ENCODE measurements at regions of chr12 and their contacts with region 1.

Region 1: GRCh38 chr12:70590051-70590450 is 47.2 kb downstream of the PTPRB start:
- DNase-seq: peak; percentile 65 to 76
- H3K4me3 ChIP-seq: no peak overlapping the region
- H3K4me3 Mint-ChIP-seq: no peak overlapping the region
- H3K27ac Mint-ChIP-seq: no peak overlapping the region
- H3K4me1 ChIP-seq: no peaks in the 10 kb centered on the region
- H3K4me1 Mint-ChIP-seq: no peaks in the 10 kb centered on the region
- H3K27me3 ChIP-seq: no peaks in the 10 kb centered on the region
- H3K27me3 Mint-ChIP-seq: peaks cover 3% of the 10 kb centered on the region
- CTCF ChIP-seq: peak; percentile 88 to 93

Region 2: DNA sequence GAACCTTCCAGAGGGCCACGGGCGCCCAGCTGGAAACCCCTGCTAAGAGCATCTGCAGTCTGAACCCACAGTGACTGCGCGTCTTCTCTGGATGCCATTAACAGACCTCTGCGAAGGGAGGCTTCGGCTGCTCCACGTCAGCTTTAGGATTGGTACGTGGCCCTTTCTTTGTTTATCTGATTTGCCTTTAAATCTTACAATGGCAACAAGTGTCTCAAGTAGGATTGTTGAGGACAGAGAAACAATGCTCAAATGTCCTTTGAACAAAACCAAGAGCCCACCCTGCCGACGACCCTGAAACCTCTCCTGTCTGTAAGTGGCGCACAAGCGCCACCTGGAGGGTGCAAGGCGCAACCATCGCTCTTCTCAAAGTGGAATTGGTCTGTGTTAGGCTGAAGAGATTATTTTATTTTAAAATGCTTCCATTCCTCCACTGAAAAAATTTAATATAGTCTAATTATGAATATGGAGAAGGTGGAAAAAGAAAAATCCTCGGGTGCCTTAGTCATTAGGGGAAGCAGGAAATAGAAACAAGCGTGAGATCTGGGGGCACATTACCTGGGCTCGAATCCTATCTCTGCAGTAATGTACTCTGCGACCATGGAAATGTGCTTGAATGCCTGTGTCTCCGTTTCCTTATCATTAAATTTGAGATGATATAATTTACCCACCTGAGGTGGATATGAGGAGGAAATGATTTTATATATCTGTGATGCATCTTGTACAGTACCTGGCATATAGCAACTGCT is 129.8 kb after region 1 on chr12:
- CTCF ChIA-PET with region 1: interaction called, 10 read pairs
- POLR2A ChIA-PET with region 1: no interaction called
- intact Hi-C with region 1: loop called (anchors 1 kb)
- DNase-seq: peak in 1 of 2 experiments; percentile 32
- H3K4me3 ChIP-seq: no peak overlapping the region
- H3K4me3 Mint-ChIP-seq: no peak overlapping the region
- H3K27ac Mint-ChIP-seq: no peak overlapping the region
- H3K4me1 ChIP-seq: no peaks in the 10 kb centered on the region
- H3K4me1 Mint-ChIP-seq: no peaks in the 10 kb centered on the region
- H3K27me3 ChIP-seq: no peaks in the 10 kb centered on the region
- H3K27me3 Mint-ChIP-seq: no peaks in the 10 kb centered on the region
- CTCF ChIP-seq: peak; percentile 87

Region 3: GRCh38 chr12:71014180-71014785 is 424.2 kb after region 1 on chr12:
- CTCF ChIA-PET with region 1: interaction called, 5 read pairs
- POLR2A ChIA-PET with region 1: no interaction called
- intact Hi-C with region 1: loop called (anchors 1 kb)
- DNase-seq: peak in 1 of 2 experiments; percentile 40
- H3K4me3 ChIP-seq: no peak overlapping the region
- H3K4me3 Mint-ChIP-seq: no peak overlapping the region
- H3K27ac Mint-ChIP-seq: no peak overlapping the region
- H3K4me1 ChIP-seq: peaks cover 12% of the 10 kb centered on the region
- H3K4me1 Mint-ChIP-seq: peaks cover 13% of the 10 kb centered on the region
- H3K27me3 ChIP-seq: no peaks in the 10 kb centered on the region
- H3K27me3 Mint-ChIP-seq: no peaks in the 10 kb centered on the region
- CTCF ChIP-seq: peak; percentile 48 to 61

Measured in Caco-2 (cell line).